ENCODE measurements at regions of chr14 and their contacts with region 1.

Region 1: GRCh38 chr14:34671716-34672115 is 41.8 kb upstream of the SNX6 start:
- DNase-seq: no peak
- H3K4me3 ChIP-seq: no peak overlapping the region
- H3K27ac ChIP-seq: no peak overlapping the region
- H3K4me1 ChIP-seq: no peaks in the 10 kb centered on the region
- H3K27me3 ChIP-seq: no peaks in the 10 kb centered on the region
- CTCF ChIP-seq: no peak
- POLR2A ChIP-seq: no peak

Region 2: DNA sequence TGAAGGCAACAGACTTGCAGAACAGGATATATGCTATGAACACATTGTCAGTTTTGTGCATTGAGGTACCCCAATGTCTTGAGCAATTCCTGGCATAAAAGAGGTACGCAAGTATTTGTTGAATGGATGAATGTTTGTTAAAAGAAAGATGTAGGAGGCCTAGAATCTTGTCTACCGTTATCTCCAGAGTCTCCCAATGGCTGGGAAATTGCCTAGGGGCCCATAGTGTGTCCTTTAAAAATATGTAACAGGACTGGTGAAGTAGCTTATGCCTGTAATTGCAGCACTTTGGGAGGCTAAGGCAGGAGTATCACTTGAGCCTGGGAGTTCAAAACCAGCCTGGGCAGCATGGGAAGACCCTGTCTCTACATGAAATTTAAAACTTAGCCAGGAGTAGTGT is 189.2 kb before region 1 on chr14:
- intact Hi-C with region 1: no loop called
- DNase-seq: no peak
- H3K4me3 ChIP-seq: no peak overlapping the region
- H3K27ac ChIP-seq: no peak overlapping the region
- H3K4me1 ChIP-seq: no peaks in the 10 kb centered on the region
- H3K27me3 ChIP-seq: no peaks in the 10 kb centered on the region
- CTCF ChIP-seq: no peak
- POLR2A ChIP-seq: no peak

Region 3: DNA sequence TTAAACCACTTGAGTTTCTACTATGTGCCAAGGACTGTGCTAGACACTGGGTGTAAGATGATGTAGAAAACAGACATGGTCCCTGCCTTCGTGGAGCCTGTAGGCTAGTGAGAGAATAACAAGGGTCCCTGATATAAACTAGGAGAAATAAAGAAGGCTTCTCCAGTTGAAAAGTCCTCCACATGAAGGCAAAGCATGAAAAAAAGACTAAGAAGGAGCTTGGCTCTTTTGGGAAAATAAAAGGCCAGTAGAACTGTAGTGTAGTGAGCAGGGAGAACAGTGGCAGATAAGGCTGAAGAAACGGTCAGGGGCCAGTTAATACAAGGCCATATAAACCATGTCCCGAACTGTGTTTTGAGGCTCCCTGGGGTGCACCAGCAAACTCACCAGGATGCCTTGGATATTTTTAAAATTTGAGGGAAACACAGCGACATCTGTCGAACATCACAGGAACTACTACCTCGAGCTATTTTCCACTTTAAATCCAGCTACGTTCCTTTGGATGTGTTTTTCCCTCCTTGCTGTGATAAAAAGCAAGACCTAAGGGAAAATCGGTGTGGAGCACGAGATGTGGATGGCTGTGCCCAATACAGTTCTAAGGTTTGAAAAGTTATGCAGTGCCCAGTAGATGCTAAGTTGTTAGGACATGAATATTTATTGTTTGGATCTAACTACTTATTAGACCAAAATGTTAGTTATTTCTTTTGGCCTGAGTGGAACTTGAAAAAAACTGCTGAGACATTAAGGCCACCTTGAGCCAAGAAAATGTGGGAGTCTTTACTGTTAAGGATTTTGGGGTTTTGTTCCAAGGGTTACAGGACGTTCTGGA is 51.2 kb after region 1 on chr14:
- intact Hi-C with region 1: loop called (anchors 5 kb)
- DNase-seq: peak; percentile 49 to 59
- H3K4me3 ChIP-seq: no peak overlapping the region
- H3K27ac ChIP-seq: peak overlapping the region; percentile 46 to 70
- H3K4me1 ChIP-seq: no peaks in the 10 kb centered on the region
- H3K27me3 ChIP-seq: no peaks in the 10 kb centered on the region
- CTCF ChIP-seq: peak; percentile 78 to 84 (median 79)
- POLR2A ChIP-seq: no peak